ENCODE measurements at regions of chr2 and their contacts with region 1.

Region 1: GRCh38 chr2:86035883-86036668 is 69.6 kb downstream of the POLR1A start:
- DNase-seq: peak; percentile 79
- H3K4me3 Mint-ChIP-seq: peak overlapping the region; percentile 54
- H3K27ac Mint-ChIP-seq: peak overlapping the region; percentile 99
- H3K4me1 Mint-ChIP-seq: peaks cover 71% of the 10 kb centered on the region
- H3K27me3 Mint-ChIP-seq: no peaks in the 10 kb centered on the region

Region 2: GRCh38 chr2:85852937-85853498 is 183.1 kb before region 1 on chr2:
- CTCF ChIA-PET with region 1: interaction called, 7 read pairs
- POLR2A ChIA-PET with region 1: interaction called, 35 read pairs
- DNase-seq: peak; percentile 80
- H3K4me3 Mint-ChIP-seq: peak overlapping the region; percentile 84
- H3K27ac Mint-ChIP-seq: peak overlapping the region; percentile 100
- H3K4me1 Mint-ChIP-seq: peaks cover 70% of the 10 kb centered on the region
- H3K27me3 Mint-ChIP-seq: no peaks in the 10 kb centered on the region

Region 3: DNA sequence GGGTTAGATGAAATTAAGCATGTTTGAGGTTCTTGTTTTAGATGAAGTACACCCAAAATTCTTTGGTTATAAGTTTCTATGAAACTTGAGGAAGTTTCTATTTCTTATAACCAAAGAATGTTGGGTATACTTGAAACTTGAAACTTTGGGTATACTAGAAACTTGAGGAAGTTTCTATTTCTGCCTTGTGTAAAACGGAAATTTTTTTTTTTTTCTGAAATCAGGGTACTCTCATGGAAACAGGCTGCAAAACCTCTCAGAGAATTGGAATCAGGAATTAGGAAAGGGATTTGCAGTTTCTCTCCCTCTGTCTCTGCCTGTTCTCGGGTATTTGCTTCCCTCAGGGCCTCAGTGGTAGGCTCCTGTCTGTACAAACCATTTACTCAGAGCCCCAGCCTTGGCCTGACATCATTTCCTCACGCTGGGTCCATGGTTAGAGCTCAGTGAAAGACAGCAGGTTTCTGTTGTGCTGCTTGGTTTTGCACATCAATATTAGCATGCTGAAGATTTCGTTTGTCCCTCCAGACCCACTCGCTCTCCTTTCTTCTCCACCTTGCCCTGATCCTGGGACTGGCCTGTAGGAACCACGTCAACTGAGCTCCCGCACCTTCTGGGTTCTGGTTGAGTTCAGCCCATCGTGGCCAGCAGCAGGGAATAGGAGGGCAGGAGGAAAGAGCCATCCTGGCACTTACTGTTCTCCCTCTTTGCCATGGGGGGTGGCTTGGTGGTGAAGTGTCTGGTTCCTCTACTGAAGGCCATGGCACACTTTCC is 36.8 kb before region 1 on chr2:
- CTCF ChIA-PET with region 1: interaction called, 26 read pairs
- POLR2A ChIA-PET with region 1: interaction called, 110 read pairs
- DNase-seq: peak; percentile 74
- H3K4me3 Mint-ChIP-seq: peak overlapping the region; percentile 3
- H3K27ac Mint-ChIP-seq: peak overlapping the region; percentile 91
- H3K4me1 Mint-ChIP-seq: peaks cover 74% of the 10 kb centered on the region
- H3K27me3 Mint-ChIP-seq: no peaks in the 10 kb centered on the region

Region 4: GRCh38 chr2:86010083-86010482 is 26.0 kb before region 1 on chr2:
- CTCF ChIA-PET with region 1: no interaction called
- POLR2A ChIA-PET with region 1: no interaction called
- DNase-seq: no peak
- H3K4me3 Mint-ChIP-seq: no peak overlapping the region
- H3K27ac Mint-ChIP-seq: no peak overlapping the region
- H3K4me1 Mint-ChIP-seq: peaks cover 12% of the 10 kb centered on the region
- H3K27me3 Mint-ChIP-seq: peaks cover 18% of the 10 kb centered on the region

Region 5: DNA sequence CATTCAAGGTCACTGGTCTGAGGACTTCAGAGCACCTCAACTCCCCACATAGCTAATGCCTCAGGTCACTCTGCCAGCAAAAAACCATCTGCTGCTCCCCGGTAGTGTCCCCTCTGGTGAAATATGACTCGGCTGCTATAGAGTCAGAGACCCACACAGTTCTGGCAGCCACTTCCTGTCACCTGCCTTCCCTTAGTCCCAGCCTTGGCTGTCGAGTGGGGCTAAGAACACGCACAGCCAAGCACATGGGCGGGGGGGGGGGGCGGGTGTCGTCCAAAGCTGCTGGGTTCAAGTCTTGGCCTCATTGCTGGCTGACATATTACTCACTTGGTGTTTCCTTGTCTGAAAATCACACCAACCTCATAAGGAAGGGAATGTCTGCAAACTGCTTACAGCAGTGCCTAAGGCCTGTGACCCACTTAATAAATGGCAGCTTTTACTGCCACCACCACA is 32.1 kb after region 1 on chr2:
- CTCF ChIA-PET with region 1: interaction called, 6 read pairs
- POLR2A ChIA-PET with region 1: interaction called, 17 read pairs
- DNase-seq: peak; percentile 74
- H3K4me3 Mint-ChIP-seq: no peak overlapping the region
- H3K27ac Mint-ChIP-seq: peak overlapping the region; percentile 76
- H3K4me1 Mint-ChIP-seq: peaks cover 33% of the 10 kb centered on the region
- H3K27me3 Mint-ChIP-seq: no peaks in the 10 kb centered on the region

Region 6: DNA sequence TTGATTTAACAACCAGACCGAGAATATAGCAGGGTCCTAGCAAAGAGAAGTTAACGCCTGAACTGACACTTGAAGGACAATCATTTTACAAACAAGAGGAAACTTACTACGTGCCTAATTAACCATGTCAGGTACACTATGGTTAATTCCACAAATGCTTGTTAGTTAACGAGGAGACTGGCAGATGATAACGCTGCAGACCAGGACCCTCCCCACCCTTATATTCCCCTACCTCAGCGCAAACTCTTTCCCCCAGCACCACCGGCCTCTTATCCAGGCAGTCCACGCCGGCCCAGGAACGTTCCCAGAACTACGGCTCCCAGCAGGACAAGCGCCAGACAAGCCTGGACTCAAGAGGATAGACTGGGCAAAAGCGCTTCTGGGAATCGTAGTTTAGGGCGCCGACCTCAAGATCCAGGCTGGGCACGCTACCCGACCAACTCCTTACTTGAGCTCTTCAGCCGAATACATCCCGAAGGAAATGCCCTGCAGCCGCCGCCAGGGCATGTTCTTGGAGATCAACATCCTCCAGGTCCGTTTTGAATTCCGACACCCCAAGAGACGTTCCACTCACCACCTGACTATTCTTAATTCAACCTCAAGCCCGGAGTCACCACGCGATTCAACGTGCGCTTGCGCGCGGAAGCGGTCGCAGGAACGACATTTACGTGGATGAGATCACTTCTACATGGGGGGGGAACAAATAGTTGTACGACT is 69.3 kb after region 1 on chr2 and contains the start of gene POLR1A:
- CTCF ChIA-PET with region 1: interaction called, 6 read pairs
- POLR2A ChIA-PET with region 1: interaction called, 10 read pairs
- DNase-seq: peak; percentile 89
- H3K4me3 Mint-ChIP-seq: peak within 1 kb of the TSS; percentile 80
- H3K27ac Mint-ChIP-seq: peak within 1 kb of the TSS; percentile 92
- H3K4me1 Mint-ChIP-seq: peaks cover 58% of the 10 kb centered on the region
- H3K27me3 Mint-ChIP-seq: no peaks in the 10 kb centered on the region
- total RNA-seq, gene POLR1A: 25.2 to 29.7 TPM

Measured in activated CD4-positive, alpha-beta memory T cell treated with anti-CD3 and anti-CD28 coated beads, Interleukin-2, amount 10 ng/mL, durations not matched to agents 7 days and 5 days (primary cell).